AG04450 (cell line): ENCODE measurements at regions of chr17 and their contacts with region 1.

Region 1: GRCh38 chr17:62791751-62792445 is 16.2 kb downstream of the MARCHF10 start:
- DNase-seq: peak; percentile 91
- H3K4me3 ChIP-seq: no peak overlapping the region; the same call in 1 of the 2 replicates
- H3K27ac ChIP-seq: peak overlapping the region; percentile 96
- H3K27me3 ChIP-seq: no peaks in the 10 kb centered on the region
- CTCF ChIP-seq: no peak

Region 2: GRCh38 chr17:62822056-62822872 is 30.4 kb after region 1 on chr17:
- CTCF ChIA-PET with region 1: no interaction called
- POLR2A ChIA-PET with region 1: interaction called, 12 read pairs
- DNase-seq: no peak
- H3K4me3 ChIP-seq: no peak overlapping the region
- H3K27ac ChIP-seq: no peak overlapping the region
- H3K27me3 ChIP-seq: no peaks in the 10 kb centered on the region
- CTCF ChIP-seq: no peak

Region 3: GRCh38 chr17:62833395-62833794 is 41.5 kb after region 1 on chr17:
- CTCF ChIA-PET with region 1: no interaction called
- POLR2A ChIA-PET with region 1: no interaction called
- DNase-seq: no peak
- H3K4me3 ChIP-seq: no peak overlapping the region
- H3K27ac ChIP-seq: no peak overlapping the region
- H3K27me3 ChIP-seq: no peaks in the 10 kb centered on the region
- CTCF ChIP-seq: no peak

Region 4: DNA sequence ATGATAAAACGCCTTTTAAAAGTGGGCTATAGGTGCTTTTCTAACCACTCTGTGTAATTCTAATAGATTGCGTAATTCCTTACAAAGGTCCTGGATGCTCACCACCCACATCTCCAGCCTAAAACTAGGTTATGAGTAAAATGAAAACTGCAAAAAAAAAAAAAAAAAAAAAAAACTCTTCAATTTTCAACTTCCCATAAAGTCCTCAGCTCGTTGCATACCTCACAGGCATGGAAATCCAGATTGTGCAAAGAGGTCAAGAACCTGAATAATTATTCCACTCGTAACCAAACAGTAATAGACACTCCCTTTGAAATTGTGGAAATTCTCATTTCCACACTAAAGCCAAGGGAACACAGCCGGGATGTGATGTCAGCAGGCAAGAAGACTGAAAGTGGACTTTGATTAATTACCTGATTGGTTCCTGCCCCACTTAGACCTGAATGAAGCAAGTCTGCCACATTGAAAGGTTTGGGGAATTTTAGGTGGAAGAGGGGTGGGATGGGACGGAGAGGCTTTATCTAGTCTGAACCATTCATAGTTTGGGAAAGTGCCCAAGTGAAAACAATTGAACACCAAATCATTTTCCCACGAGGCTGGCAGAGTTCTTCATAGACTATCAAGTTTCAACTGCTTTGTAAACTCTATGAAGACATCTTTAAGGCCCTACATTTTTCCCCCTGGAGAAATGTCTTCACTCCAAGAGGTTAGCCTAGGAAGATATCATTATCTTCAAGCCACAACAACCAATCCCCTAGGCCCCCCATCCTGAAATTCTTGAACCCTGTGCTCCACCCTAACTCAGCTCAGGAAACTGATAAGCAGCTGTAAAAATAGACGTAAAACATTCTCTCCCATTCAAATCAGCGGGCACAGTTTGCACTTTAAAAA is 125.0 kb after region 1 on chr17:
- CTCF ChIA-PET with region 1: no interaction called
- POLR2A ChIA-PET with region 1: no interaction called
- DNase-seq: no peak
- H3K4me3 ChIP-seq: no peak overlapping the region
- H3K27ac ChIP-seq: no peak overlapping the region
- H3K27me3 ChIP-seq: no peaks in the 10 kb centered on the region
- CTCF ChIP-seq: no peak